Activated B cell treated with CpG ODN at 0.5 μM for 24 hours (primary cell): ENCODE measurements at regions of chrX and their contacts with region 1.

Region 1: GRCh38 chrX:19840899-19841648 is 46.3 kb downstream of the SH3KBP1 start:
- DNase-seq: no peak
- ATAC-seq: peak; percentile 65
- H3K4me3 Mint-ChIP-seq: peak overlapping the region; percentile 62
- H3K27ac Mint-ChIP-seq: peak overlapping the region; percentile 89
- H3K4me1 Mint-ChIP-seq: peaks cover 67% of the 10 kb centered on the region
- H3K27me3 Mint-ChIP-seq: no peaks in the 10 kb centered on the region
- CTCF ChIP-seq: no peak

Region 2: DNA sequence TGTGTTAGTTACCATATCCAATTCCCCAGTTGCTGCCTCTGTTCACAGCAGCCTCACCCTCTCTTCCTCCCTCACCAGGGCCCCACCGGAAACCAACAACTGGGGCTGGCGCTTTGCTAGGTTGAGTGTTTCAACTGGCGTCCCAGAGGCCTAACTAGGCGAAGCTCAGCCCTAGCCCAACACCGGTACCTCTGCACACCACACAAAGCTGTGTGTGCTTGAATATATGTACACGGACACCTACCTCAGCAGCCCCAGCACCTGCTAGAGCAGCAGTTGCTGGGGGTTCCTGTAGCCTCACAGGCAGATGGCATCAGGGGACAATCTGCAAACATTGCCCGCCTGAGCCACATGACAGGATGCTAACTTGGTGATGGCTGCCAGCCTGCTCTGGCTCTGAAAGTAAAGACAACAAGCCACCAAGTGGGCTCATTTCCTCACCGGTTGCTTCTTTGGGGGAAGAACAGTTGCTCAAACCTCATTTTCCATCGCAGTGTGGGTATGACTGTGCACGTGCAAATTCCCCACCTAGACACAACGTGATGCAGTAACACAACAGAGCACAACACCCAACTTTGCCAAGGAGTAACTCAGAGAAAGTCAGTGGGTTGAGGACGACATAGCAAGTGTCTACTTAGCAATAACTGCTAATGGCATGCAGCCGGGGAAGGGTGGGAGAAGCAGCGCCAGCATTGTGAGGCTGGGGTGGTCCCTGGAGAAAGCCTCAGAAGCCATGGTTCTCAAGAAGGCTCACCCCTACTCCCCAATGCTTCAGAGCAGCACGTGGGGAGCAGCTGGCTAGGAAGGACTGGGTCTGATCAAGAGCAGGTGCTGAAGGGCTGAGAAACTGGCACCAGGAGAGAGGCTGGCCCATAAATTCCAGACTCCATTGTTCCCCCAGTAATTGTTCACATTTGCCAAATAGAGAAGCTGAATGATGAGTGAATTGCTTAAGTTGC is 93.1 kb before region 1 on chrX:
- CTCF ChIA-PET with region 1: no interaction called
- POLR2A ChIA-PET with region 1: interaction called, 4 read pairs
- intact Hi-C with region 1: loop called (anchors 2 kb)
- DNase-seq: peak; percentile 43
- ATAC-seq: peak; percentile 65
- H3K4me3 Mint-ChIP-seq: peak overlapping the region; percentile 35
- H3K27ac Mint-ChIP-seq: peak overlapping the region; percentile 92
- H3K4me1 Mint-ChIP-seq: peaks cover 98% of the 10 kb centered on the region
- H3K27me3 Mint-ChIP-seq: no peaks in the 10 kb centered on the region
- CTCF ChIP-seq: no peak

Region 3: DNA sequence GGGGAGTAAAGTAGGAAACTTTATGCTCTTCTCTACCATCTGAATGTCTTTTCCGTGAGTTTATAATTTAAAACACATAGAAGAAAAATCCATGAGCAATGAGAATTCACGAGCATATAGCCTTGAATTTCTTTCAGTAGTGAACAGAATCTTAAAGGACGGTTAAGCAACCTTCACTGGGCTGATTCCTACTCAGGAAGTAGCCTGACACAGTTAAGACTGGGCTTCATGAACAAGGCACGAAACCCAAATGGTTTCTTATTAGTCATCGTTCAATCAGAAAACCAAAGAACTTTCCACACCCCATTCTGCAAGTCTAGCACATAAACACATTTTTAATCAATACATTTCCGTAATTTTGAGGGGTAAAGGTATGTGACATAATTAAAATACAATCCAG is 49.5 kb before region 1 on chrX:
- CTCF ChIA-PET with region 1: no interaction called
- POLR2A ChIA-PET with region 1: no interaction called
- intact Hi-C with region 1: loop called (anchors 5 kb)
- DNase-seq: no peak
- ATAC-seq: peak; percentile 58
- H3K4me3 Mint-ChIP-seq: no peak overlapping the region
- H3K27ac Mint-ChIP-seq: peak overlapping the region; percentile 72
- H3K4me1 Mint-ChIP-seq: peaks cover 56% of the 10 kb centered on the region
- H3K27me3 Mint-ChIP-seq: no peaks in the 10 kb centered on the region
- CTCF ChIP-seq: no peak

Region 4: DNA sequence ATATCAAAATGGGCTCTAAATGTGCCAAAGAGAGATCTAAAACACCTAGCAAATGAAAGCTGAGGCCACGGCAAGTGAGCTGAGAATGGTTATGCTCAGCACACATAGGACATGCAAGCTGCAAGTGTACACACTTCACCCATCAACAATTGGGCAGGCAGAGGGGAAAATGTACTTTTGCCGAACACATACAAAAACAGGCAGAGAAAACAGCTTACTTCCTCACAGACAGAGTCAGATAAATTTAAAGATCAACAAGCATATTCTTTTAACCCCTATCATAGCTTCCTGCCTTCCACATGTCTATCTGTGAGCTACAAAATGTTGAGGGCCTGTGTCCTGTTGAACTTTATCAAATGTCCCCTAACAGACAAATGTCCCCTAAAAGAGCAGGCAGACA is 14.0 kb before region 1 on chrX:
- CTCF ChIA-PET with region 1: no interaction called
- POLR2A ChIA-PET with region 1: interaction called, 4 read pairs
- intact Hi-C with region 1: loop called (anchors 2 kb)
- DNase-seq: no peak
- ATAC-seq: no peak
- H3K4me3 Mint-ChIP-seq: peak overlapping the region; percentile 38
- H3K27ac Mint-ChIP-seq: peak overlapping the region; percentile 76
- H3K4me1 Mint-ChIP-seq: peaks cover 31% of the 10 kb centered on the region
- H3K27me3 Mint-ChIP-seq: no peaks in the 10 kb centered on the region
- CTCF ChIP-seq: no peak

Region 5: GRCh38 chrX:19875050-19875431 is 34.0 kb after region 1 on chrX:
- CTCF ChIA-PET with region 1: no interaction called
- POLR2A ChIA-PET with region 1: interaction called, 5 read pairs
- intact Hi-C with region 1: loop called (anchors 2 kb)
- DNase-seq: no peak
- ATAC-seq: peak; percentile 79
- H3K4me3 Mint-ChIP-seq: peak overlapping the region; percentile 69
- H3K27ac Mint-ChIP-seq: peak overlapping the region; percentile 84
- H3K4me1 Mint-ChIP-seq: peaks cover 86% of the 10 kb centered on the region
- H3K27me3 Mint-ChIP-seq: no peaks in the 10 kb centered on the region
- CTCF ChIP-seq: no peak

Region 6: DNA sequence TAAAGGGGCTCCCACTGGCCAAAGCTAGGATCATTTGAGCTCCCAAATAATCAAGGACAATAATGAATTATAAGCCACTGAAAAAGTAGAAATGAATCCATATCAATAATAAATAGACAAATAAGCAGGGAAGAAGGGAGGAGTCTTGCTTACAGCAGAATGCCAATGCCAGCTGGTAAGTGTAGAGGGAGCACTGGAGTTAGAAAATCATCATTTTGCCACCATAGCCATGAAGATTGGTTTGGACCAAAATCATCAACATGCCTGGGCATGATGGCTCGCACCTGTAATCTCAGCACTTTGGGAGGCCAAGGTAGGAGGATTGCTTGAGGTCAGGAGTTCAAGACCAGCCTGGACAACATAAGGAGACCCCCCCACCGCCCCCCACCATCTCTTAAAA is 66.7 kb after region 1 on chrX:
- CTCF ChIA-PET with region 1: no interaction called
- POLR2A ChIA-PET with region 1: no interaction called
- intact Hi-C with region 1: no loop called
- DNase-seq: no peak
- ATAC-seq: no peak
- H3K4me3 Mint-ChIP-seq: no peak overlapping the region
- H3K27ac Mint-ChIP-seq: no peak overlapping the region
- H3K4me1 Mint-ChIP-seq: peaks cover 12% of the 10 kb centered on the region
- H3K27me3 Mint-ChIP-seq: no peaks in the 10 kb centered on the region
- CTCF ChIP-seq: no peak

Region 7: GRCh38 chrX:20026278-20026677 is 185.2 kb after region 1 on chrX:
- CTCF ChIA-PET with region 1: no interaction called
- POLR2A ChIA-PET with region 1: no interaction called
- intact Hi-C with region 1: no loop called
- DNase-seq: no peak
- ATAC-seq: no peak
- H3K4me3 Mint-ChIP-seq: no peak overlapping the region
- H3K27ac Mint-ChIP-seq: no peak overlapping the region
- H3K4me1 Mint-ChIP-seq: no peaks in the 10 kb centered on the region
- H3K27me3 Mint-ChIP-seq: no peaks in the 10 kb centered on the region
- CTCF ChIP-seq: no peak